Heart right ventricle (tissue), 16 donors: ENCODE measurements at regions of chr5 and their contacts with region 1.

Region 1: DNA sequence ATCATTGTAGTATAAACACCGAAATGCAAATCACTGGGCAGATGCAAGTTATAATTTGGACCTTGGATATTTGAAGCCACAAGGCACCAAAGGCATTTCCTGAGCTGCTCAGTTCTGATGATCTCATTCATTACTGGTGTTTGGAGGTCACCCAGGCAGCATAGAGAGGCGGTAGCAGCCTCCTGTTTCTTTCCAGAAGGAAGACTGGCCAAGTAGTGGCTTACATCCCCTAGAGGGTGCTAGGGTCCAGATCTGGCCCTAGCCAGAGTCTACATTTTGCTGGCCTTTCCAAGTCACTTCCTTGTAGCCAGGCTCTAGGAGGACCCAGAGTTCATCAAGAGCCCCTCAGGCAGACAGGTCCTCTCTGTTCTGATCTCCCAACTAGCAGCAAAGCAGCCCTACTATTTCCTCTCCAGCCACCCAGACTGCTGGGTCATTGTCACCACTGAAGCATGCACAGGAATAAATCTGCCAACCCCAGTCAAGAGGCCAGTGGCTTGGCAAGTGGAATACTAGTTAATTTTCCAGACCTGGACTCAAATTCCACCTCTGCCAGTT is 33.4 kb upstream of the TTC1 start:
- DNase-seq: peak in 1 of 2 donors; percentile 27
- ATAC-seq: peak; percentile 75 to 91 (median 80)
- H3K4me3 ChIP-seq: no peak overlapping the region
- H3K27ac ChIP-seq: peak overlapping the region in 3 of 10 donors; percentile 9 to 48 (median 40)
- H3K4me1 ChIP-seq: peaks cover 0 to 13% (median 9%) of the 10 kb centered on the region in 9 donors
- H3K27me3 ChIP-seq: peaks cover 0 to 42% (median 25%) of the 10 kb centered on the region in 7 donors
- CTCF ChIP-seq: peak in 5 of 9 donors; percentile 21 to 37 (median 32)

Region 2: GRCh38 chr5:159286420-159287035 is 689.0 kb before region 1 on chr5:
- intact Hi-C with region 1: loop called in 4 of 10 experiments (anchors 5 to 10 kb)
- DNase-seq: no peak
- ATAC-seq: peak in 1 of 8 donors; percentile 50
- H3K4me3 ChIP-seq: no peak overlapping the region
- H3K27ac ChIP-seq: no peak overlapping the region
- H3K4me1 ChIP-seq: peaks cover 0 to 5% (median 0%) of the 10 kb centered on the region in 9 donors
- H3K27me3 ChIP-seq: no peaks in the 10 kb centered on the region
- CTCF ChIP-seq: peak in 8 of 9 donors; percentile 32 to 67 (median 54)

Region 3: DNA sequence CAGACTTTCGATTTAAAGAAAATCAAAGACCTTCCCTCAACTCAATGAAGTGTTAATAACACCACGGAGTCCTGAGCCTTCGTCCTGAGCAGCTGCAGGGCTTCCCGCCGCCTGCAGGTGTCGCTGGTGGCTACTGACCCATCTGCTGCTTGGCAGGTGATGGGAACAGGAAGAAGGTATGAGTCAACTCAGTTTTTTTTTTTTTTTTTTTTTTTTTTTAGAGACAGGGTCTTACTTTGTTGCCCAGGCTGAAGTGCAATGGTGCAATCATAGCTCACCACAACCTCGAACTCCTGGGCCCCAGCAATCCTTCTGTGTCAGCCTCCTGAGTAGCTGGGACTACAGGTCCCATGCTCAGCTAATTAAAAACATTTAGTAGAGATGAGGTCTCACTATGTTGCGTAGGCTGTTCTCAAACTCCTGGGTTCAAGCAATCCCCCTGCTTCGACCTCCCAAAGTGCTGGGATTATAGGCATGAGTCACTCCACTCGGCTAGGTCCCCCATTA is 459.6 kb before region 1 on chr5:
- intact Hi-C with region 1: loop called in 2 of 10 experiments (anchors 10 kb)
- DNase-seq: peak; percentile 17 to 53
- ATAC-seq: peak; percentile 49 to 78 (median 69)
- H3K4me3 ChIP-seq: no peak overlapping the region
- H3K27ac ChIP-seq: no peak overlapping the region
- H3K4me1 ChIP-seq: peaks cover 0 to 8% (median under 1%) of the 10 kb centered on the region in 9 donors
- H3K27me3 ChIP-seq: no peaks in the 10 kb centered on the region
- CTCF ChIP-seq: peak; percentile 45 to 72 (median 70)

Region 4: DNA sequence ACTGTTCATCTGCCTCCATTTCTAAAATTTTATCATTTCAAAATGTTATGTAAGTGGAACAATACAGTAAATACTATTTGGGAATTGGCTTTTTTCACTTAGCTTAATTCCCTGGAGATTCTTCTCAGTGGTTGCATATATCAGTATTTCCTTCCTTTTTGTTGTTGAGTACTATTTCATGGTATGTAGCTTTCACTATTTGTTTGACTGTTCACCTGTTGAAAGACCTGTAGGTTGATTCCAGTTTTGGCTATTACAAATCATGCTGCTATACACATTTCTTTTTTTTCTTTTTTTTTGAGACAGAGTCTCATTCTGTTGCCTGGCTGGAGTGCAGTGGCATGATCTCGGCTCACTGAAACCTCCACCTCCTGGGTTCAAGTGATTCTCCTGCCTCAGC is 176.7 kb after region 1 on chr5:
- intact Hi-C with region 1: no loop called
- DNase-seq: no peak
- ATAC-seq: no peak
- H3K4me3 ChIP-seq: no peak overlapping the region
- H3K27ac ChIP-seq: no peak overlapping the region
- H3K4me1 ChIP-seq: peaks cover 0 to 2% (median 0%) of the 10 kb centered on the region in 9 donors
- H3K27me3 ChIP-seq: no peaks in the 10 kb centered on the region
- CTCF ChIP-seq: no peak